Activated T-helper 1 cell treated with anti-CD3 and anti-CD28 coated beads, Interleukin-12 subunit alpha, Interleukin-12 subunit beta, Interleukin-2, Interleukin-4 antibody, amounts not matched to agents 30 ng/mL and 10 ng/mL and 1 ng/mL, durations not matched to agents 14 hours and 24 hours and 36 hours (primary cell): ENCODE measurements at regions of chr3 and their contacts with region 1.

Region 1: DNA sequence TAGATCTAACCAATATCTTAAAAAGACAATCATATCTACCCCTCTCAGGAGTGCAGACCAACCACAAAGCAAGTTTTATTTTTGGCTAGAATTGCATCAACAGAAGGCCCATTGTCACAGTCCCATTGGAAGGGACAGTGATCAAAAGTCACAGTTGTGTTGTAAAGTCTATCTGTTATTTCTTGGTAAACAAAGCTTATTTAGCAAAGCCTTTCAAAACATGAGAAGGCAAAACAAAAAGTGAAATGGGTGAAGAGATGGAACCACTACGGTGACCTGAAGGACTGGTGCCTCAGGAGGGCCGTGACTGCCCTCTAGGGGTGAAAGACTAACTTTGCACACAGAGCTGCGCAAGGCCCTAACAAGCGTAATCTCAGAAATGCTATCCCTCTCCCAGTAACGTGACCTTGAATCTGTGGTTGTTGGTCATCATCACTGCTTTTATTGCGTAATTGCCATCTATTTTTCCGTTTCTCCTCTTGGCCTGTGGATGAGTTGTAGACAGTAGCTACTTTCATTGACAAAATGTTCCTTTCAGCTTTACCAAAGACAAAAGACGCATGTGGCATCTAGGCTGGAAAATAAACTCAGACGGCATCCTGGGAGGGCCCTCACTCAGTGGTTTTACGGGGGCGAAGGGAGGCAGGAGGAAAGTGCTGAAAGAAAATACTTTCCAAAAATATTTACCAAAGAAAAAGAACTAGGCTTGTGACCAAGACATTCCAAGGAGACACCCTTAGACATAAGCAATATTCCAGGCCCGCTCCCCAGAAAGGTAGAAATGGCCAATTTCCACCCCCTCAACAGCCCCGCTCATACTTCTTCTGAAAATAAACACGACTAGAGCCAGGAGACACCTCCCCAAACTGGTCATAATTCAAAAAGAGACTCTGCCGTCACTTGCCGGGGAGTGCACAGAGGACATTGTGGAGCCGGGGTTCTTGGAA is 79.4 kb downstream of the FRMD4B start:
- DNase-seq: peak; percentile 60
- H3K4me3 Mint-ChIP-seq: peak overlapping the region; percentile 55
- H3K27ac Mint-ChIP-seq: peak overlapping the region; percentile 58
- H3K4me1 Mint-ChIP-seq: peaks cover 30% of the 10 kb centered on the region
- H3K27me3 Mint-ChIP-seq: no peaks in the 10 kb centered on the region

Region 2: GRCh38 chr3:69161587-69162307 is 144.8 kb before region 1 on chr3:
- intact Hi-C with region 1: loop called (anchors 1 kb)
- DNase-seq: peak; percentile 34
- H3K4me3 Mint-ChIP-seq: no peak overlapping the region
- H3K27ac Mint-ChIP-seq: peak overlapping the region; percentile 6
- H3K4me1 Mint-ChIP-seq: peaks cover 8% of the 10 kb centered on the region
- H3K27me3 Mint-ChIP-seq: peaks cover 2% of the 10 kb centered on the region

Region 3: GRCh38 chr3:69212411-69213139 is 93.9 kb before region 1 on chr3:
- intact Hi-C with region 1: loop called (anchors 1 kb)
- DNase-seq: no peak
- H3K4me3 Mint-ChIP-seq: peak overlapping the region; percentile 43
- H3K27ac Mint-ChIP-seq: peak overlapping the region; percentile 92
- H3K4me1 Mint-ChIP-seq: peaks cover 57% of the 10 kb centered on the region
- H3K27me3 Mint-ChIP-seq: no peaks in the 10 kb centered on the region

Region 4: GRCh38 chr3:69282181-69282580 is 24.3 kb before region 1 on chr3:
- intact Hi-C with region 1: loop called (anchors 1 kb)
- DNase-seq: peak; percentile 12
- H3K4me3 Mint-ChIP-seq: peak overlapping the region; percentile 19
- H3K27ac Mint-ChIP-seq: peak overlapping the region; percentile 84
- H3K4me1 Mint-ChIP-seq: peaks cover 45% of the 10 kb centered on the region
- H3K27me3 Mint-ChIP-seq: no peaks in the 10 kb centered on the region

Region 5: GRCh38 chr3:69425261-69425660 is 118.7 kb after region 1 on chr3:
- intact Hi-C with region 1: loop called (anchors 1 kb)
- DNase-seq: peak; percentile 2
- H3K4me3 Mint-ChIP-seq: no peak overlapping the region
- H3K27ac Mint-ChIP-seq: no peak overlapping the region
- H3K4me1 Mint-ChIP-seq: peaks cover 5% of the 10 kb centered on the region
- H3K27me3 Mint-ChIP-seq: no peaks in the 10 kb centered on the region